Esophagus squamous epithelium (tissue), 5 donors: ENCODE measurements at regions of chr3 and their contacts with region 1.

Region 1: DNA sequence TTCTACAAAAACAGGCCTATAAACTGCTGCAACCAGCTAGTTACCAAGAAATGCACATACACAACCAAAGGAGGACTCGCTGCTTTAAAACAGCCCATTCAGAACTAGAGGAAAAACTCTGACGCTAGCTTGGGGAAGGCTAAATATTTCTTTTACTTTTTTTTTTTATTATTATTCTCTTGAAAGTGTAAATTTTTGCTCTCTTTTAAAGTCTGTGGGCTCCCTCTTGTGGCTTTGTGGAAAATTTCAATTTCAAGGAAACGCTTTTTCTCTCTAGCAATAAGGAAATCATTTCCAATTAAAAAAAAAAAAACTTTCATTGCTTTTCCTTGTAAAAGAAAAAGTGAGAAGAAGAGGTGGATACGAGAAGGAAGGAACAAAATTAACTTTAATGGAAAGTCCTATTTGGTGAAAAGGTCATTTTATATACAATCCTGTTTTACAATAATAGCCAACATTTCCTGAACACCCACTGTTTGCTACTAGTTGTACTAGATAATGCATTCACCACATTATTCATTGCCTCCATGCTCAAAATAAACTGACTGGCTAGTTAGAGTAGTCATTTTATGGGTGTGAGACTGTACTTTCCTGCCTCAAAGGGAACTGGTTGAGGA is 51.2 kb upstream of the SAMMSON start:
- DNase-seq: no peak
- H3K4me3 ChIP-seq: no peak overlapping the region
- H3K27ac ChIP-seq: no peak overlapping the region
- H3K4me1 ChIP-seq: no peaks in the 10 kb centered on the region
- H3K27me3 ChIP-seq: no peaks in the 10 kb centered on the region
- CTCF ChIP-seq: peak; percentile 35 to 57 (median 52)
- POLR2A ChIP-seq: no peak

Region 2: DNA sequence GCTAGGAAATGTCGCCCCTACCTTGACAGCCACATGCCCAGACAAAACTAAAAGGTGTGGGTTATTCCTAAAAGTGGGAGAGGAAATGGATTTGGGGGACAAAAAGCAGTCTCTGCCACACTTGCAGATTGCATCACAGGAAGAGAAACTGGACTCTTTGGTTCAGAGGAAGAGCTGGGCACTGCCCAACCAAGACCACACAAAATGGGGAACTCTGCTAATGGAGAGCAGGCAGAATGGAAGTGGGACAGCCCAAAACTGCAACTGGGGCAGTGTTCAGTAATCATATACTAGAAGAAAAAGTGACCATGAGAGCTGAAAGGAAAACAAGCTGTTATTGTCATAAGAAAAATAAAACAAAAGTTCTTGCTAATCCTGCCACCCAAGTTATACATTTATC is 423.5 kb before region 1 on chr3:
- intact Hi-C with region 1: no loop called
- DNase-seq: no peak
- H3K4me3 ChIP-seq: no peak overlapping the region
- H3K27ac ChIP-seq: no peak overlapping the region
- H3K4me1 ChIP-seq: no peaks in the 10 kb centered on the region
- H3K27me3 ChIP-seq: peaks cover 0 to 31% (median 0%) of the 10 kb centered on the region in 4 donors
- CTCF ChIP-seq: no peak
- POLR2A ChIP-seq: no peak

Region 3: GRCh38 chr3:69639851-69640250 is 308.5 kb before region 1 on chr3:
- intact Hi-C with region 1: no loop called
- DNase-seq: no peak
- H3K4me3 ChIP-seq: no peak overlapping the region
- H3K27ac ChIP-seq: no peak overlapping the region
- H3K4me1 ChIP-seq: no peaks in the 10 kb centered on the region
- H3K27me3 ChIP-seq: no peaks in the 10 kb centered on the region
- CTCF ChIP-seq: no peak
- POLR2A ChIP-seq: no peak

Region 4: GRCh38 chr3:69691860-69692259 is 256.5 kb before region 1 on chr3:
- intact Hi-C with region 1: loop called (anchors 10 kb)
- DNase-seq: no peak
- H3K4me3 ChIP-seq: no peak overlapping the region
- H3K27ac ChIP-seq: no peak overlapping the region
- H3K4me1 ChIP-seq: peaks cover 0 to 10% (median 3%) of the 10 kb centered on the region in 3 donors
- H3K27me3 ChIP-seq: no peaks in the 10 kb centered on the region
- CTCF ChIP-seq: no peak
- POLR2A ChIP-seq: no peak

Region 5: DNA sequence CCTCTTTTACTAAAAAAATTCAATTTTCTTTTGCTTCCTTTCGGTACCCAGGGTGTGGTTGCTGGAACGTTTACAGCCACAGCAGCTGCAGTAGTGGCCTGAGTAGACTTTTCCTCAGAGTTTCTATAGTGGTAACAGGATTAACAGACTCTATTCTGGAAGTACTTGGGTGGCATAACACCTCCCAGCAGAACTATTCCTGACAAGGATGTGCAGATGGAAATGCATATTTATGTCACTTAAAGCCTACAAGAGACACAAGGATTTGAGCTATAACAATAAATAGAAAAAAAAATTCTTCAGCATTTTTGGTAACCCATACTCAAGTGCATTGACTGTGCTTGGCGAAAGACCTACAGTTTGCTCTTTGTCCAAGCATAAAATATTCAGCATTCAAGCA is 270.1 kb after region 1 on chr3:
- intact Hi-C with region 1: no loop called
- DNase-seq: no peak
- H3K4me3 ChIP-seq: no peak overlapping the region
- H3K27ac ChIP-seq: no peak overlapping the region
- H3K4me1 ChIP-seq: no peaks in the 10 kb centered on the region
- H3K27me3 ChIP-seq: no peaks in the 10 kb centered on the region
- CTCF ChIP-seq: no peak
- POLR2A ChIP-seq: no peak